ENCODE measurements at regions of chr6 and their contacts with region 1.

Region 1: DNA sequence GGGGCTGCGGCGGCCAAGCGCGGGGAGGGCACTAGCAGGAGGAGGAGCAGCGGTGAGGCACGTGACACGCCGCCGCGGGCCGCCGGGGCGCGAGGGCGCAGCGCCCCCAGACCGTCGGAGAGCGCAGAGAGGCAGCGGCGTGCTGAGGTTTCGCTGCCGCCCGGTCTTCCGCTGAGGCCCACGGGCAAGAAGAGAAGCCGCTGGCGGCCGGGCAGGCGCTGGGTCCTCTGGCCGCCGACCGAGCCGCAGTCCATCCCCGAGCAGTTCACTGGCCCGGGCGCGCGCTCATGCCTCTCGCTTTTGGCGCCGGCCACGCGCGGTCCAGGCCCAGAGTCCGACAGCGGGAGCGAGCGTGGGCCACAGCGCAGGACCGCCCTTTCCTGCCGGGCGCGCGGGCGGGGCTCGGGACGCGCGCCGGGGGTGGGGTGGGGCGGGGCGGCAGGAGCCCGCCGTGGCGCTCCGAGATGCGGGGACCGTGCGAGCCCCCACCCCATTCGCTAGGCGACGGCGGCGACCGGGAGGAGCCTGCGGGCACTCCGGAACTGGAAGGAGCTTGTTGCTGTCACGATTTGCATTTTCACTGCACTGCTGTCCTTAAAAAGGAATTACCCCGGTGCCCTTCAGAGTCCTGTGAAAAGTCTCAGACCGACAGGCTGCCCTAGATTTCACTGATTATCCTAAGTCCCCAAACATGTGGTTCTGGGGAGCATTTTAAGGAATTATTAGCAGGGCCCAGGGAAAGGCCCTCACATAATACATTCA is at the start of gene MCUR1:
- DNase-seq: peak; percentile 95
- H3K4me3 Mint-ChIP-seq: peak within 1 kb of the TSS; percentile 88
- H3K27ac Mint-ChIP-seq: peak within 1 kb of the TSS; percentile 84
- H3K4me1 Mint-ChIP-seq: peaks cover 28% of the 10 kb centered on the region
- H3K27me3 Mint-ChIP-seq: peaks cover 16% of the 10 kb centered on the region
- total RNA-seq, gene MCUR1: 39.0 and 43.7 TPM in 2 replicates

Region 2: DNA sequence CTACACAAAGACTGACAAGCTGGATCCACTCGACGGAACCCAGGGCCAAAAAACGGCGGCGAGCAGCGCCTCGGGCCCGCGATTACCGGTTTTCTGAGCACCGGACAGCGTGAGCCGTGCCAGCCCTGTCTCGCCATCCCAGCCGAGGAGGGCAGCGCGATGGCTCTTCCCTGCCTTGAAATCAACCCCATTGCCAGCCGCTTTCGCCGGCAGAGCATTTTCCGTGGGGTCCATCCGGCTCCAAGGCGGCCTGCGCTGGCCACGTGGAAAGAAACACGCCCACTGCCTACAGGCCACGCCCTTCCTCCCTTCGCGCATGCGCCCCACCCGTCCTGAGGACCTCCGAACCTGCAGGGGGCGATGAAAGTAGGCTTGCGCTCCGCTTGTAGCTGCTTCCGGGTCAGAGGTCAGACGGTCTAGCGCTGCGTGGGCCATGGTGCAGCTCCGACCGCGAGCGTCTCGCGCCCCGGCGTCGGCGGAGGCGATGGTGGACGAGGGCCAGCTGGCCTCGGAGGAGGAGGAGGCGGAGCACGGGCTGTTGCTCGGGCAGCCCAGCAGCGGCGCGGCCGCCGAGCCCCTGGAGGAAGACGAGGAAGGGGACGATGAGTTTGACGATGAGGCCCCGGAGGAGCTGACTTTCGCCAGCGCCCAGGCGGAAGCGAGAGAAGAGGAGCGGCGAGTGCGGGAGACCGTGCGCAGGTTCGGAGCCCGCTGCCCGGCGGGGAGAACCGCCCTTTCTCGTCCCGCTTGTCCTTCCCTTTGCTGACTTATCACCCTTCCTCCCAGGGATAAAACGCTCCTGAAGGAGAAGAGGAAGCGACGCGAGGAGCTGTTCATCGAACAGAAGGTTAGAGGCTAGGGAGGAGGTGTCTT is 199.2 kb before region 1 on chr6 and contains the start of gene NOL7:
- intact Hi-C with region 1: loop called (anchors 1 kb)
- DNase-seq: peak; percentile 100
- H3K4me3 Mint-ChIP-seq: peak within 1 kb of the TSS; percentile 92
- H3K27ac Mint-ChIP-seq: peak within 1 kb of the TSS; percentile 96
- H3K4me1 Mint-ChIP-seq: peaks cover 33% of the 10 kb centered on the region
- H3K27me3 Mint-ChIP-seq: no peaks in the 10 kb centered on the region
- total RNA-seq, gene NOL7: 103 and 104 TPM in 2 replicates

Region 3: DNA sequence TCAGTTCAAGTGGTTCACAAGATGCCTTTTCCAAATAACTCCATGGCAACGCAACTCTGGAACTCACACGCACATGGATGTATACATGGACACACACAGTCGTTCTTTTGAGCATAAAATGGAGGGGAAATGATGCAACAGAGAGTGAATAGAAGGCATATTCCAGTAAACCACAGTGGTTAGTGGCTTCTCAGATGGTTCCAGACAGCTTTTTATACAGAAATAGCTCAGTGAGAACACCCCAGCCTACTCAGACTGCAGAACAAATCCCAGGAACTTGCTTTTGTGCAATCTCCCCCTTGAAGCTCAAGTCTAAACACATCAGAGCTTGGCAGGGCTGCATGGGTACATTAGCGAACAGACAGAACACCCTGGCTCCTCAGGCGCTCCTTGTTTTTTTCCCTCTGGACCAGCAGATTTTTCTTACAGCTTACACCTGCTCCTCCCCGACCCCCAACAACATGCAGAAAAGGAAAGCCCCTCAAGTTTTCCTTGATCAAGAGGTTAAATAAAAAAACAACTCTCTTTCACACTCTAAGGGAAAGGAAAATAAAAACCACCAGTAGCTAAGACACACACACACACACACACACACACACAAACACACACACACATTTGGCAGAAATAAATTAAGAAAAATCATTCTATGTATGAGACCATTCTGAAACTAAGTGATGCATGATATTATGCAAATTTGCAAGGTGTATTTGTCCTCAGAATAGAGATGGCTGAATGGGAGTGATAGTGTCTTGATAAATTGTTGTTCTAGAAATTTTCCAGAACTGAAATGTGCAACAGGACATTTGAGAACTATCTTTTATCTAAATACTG is 51.5 kb before region 1 on chr6:
- intact Hi-C with region 1: no loop called
- DNase-seq: peak; percentile 82
- H3K4me3 Mint-ChIP-seq: peak overlapping the region; percentile 79
- H3K27ac Mint-ChIP-seq: peak overlapping the region; percentile 87
- H3K4me1 Mint-ChIP-seq: peaks cover 44% of the 10 kb centered on the region
- H3K27me3 Mint-ChIP-seq: no peaks in the 10 kb centered on the region

Region 4: DNA sequence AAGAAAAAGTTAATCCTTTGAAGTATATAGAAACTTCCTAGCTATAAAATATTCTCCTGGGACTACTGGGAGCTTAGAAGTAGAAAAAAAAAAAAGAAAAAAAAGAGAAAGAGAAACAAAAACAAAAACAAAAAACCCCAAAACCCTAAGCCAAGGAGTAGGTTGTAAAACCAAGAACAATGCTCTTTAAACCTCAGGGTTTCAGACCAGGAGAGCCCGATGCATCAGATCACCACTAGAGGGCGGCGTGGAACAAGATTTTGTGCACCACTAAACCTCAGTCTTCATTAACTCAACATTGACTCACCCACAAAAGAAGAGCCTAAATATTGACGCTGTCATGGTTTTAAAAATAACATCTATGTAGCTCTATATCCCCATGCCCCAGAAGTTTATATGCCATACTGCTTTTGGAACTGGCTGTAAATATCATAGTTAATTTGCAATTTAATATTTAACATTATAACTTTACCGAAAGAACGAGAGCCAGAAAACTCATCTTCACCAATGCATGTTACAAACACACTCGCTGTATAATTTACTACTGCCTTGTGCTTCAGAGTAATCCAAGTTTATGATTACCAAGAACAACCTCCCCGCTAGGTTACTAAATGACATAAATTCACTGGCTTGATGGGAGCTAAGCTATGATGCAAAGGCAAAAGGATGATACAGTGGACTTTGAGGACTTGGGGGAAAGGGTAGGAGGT is 19.2 kb before region 1 on chr6:
- intact Hi-C with region 1: loop called (anchors 1 kb)
- DNase-seq: peak; percentile 95
- H3K4me3 Mint-ChIP-seq: no peak overlapping the region
- H3K27ac Mint-ChIP-seq: peak overlapping the region; percentile 51
- H3K4me1 Mint-ChIP-seq: peaks cover 14% of the 10 kb centered on the region
- H3K27me3 Mint-ChIP-seq: no peaks in the 10 kb centered on the region

Region 5: GRCh38 chr6:14117158-14118090 is 303.1 kb after region 1 on chr6 and contains the start of gene CD83:
- intact Hi-C with region 1: loop called (anchors 1 kb)
- DNase-seq: peak; percentile 95
- H3K4me3 Mint-ChIP-seq: peak within 1 kb of the TSS; percentile 89
- H3K27ac Mint-ChIP-seq: peak within 1 kb of the TSS; percentile 96
- H3K4me1 Mint-ChIP-seq: peaks cover 39% of the 10 kb centered on the region
- H3K27me3 Mint-ChIP-seq: peaks cover 8% of the 10 kb centered on the region
- total RNA-seq, gene CD83: 80.2 and 84.8 TPM in 2 replicates

Region 6: GRCh38 chr6:14144678-14145113 is 330.3 kb after region 1 on chr6:
- intact Hi-C with region 1: loop called (anchors 10 kb)
- DNase-seq: peak; percentile 91
- H3K4me3 Mint-ChIP-seq: no peak overlapping the region
- H3K27ac Mint-ChIP-seq: no peak overlapping the region
- H3K4me1 Mint-ChIP-seq: peaks cover 6% of the 10 kb centered on the region
- H3K27me3 Mint-ChIP-seq: no peaks in the 10 kb centered on the region

Measured in activated CD4-positive, alpha-beta T cell treated with anti-CD3 and anti-CD28 coated beads, Interleukin-2, amount 10 ng/mL, durations not matched to agents 24 days and 14 days (primary cell).